AG04449 (cell line): ENCODE measurements at regions of chr6 and their contacts with region 1.

Region 1: GRCh38 chr6:113829696-113830045 is 27.5 kb upstream of the MARCKS start:
- DNase-seq: peak; percentile 75
- H3K4me3 ChIP-seq: no peak overlapping the region
- CTCF ChIP-seq: no peak

Region 2: DNA sequence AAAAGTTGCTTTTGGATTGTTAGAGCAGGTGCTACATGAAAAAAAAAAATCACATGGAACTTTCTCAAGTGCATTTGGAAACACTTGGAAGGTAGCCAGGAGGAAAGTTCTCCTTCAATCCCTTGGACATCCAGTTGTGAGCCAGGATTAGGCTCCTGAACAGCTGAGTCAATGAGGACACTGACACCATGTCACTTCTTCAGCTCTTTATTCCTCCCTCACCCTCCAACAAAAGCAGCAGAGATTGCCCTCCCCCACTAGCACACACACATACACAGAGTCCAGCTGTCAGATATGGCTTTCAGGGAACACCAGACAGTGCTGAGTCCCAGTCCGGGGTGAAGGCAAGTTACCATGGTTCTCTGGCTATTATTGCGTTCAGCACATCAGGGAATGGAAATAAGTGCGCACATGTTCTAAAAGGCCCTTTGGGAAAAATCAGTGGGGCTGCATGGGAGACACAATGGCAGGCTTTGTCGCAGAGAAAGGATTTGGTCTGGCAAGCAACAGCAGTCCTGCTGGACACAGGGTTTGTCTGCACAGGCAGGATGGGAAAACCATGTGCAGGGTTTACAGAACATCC is 97.2 kb before region 1 on chr6:
- CTCF ChIA-PET with region 1: no interaction called
- POLR2A ChIA-PET with region 1: no interaction called
- DNase-seq: no peak
- H3K4me3 ChIP-seq: no peak overlapping the region
- CTCF ChIP-seq: no peak

Region 3: GRCh38 chr6:113809826-113810225 is 19.8 kb before region 1 on chr6:
- CTCF ChIA-PET with region 1: no interaction called
- POLR2A ChIA-PET with region 1: no interaction called
- DNase-seq: no peak
- H3K4me3 ChIP-seq: no peak overlapping the region
- CTCF ChIP-seq: no peak

Region 4: DNA sequence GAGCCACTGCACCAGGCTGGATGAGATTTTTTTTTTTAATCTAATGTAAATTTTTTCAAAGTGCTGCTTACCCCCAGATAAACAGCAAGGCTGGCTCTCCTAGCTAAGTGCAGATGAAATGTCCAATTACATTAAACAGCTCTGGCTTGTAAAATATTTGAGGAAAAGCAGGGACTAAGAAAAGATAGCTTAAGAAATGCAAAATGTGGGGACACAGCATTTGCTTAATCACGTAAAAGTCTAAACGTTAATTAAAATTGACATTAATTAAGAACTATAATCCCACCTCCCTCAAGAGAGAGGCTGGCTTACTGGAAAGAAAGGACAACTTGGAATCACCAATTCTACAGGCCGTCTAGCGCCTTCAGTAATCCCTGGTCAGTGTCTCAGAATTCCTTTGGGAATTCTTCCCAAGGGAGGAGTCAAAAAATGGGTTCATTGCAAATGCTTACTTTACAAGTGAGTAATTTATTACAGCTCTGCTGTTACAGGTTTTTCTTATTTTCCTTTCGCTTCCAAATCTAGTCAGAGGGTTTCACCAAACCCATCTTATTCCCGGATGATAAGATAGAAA is 13.9 kb after region 1 on chr6:
- CTCF ChIA-PET with region 1: interaction called, 10 read pairs
- POLR2A ChIA-PET with region 1: no interaction called
- DNase-seq: no peak
- H3K4me3 ChIP-seq: no peak overlapping the region
- CTCF ChIP-seq: no peak